ENCODE measurements at regions of chr5 and their contacts with region 1.

Region 1: GRCh38 chr5:118791926-118792734 is 196.2 kb downstream of the DTWD2 start:
- DNase-seq: peak; percentile 44
- ATAC-seq: peak; percentile 81
- H3K4me3 Mint-ChIP-seq: no peak overlapping the region
- H3K27ac Mint-ChIP-seq: no peak overlapping the region
- H3K4me1 Mint-ChIP-seq: no peaks in the 10 kb centered on the region
- H3K27me3 Mint-ChIP-seq: peaks cover 7% of the 10 kb centered on the region

Region 2: GRCh38 chr5:117454716-117455596 is 1337.2 kb before region 1 on chr5:
- CTCF ChIA-PET with region 1: interaction called, 14 read pairs
- DNase-seq: peak; percentile 58
- ATAC-seq: peak; percentile 63
- H3K4me3 Mint-ChIP-seq: peak overlapping the region; percentile 27
- H3K27ac Mint-ChIP-seq: no peak overlapping the region
- H3K4me1 Mint-ChIP-seq: peaks cover 2% of the 10 kb centered on the region
- H3K27me3 Mint-ChIP-seq: no peaks in the 10 kb centered on the region

Measured in activated CD8-positive, alpha-beta memory T cell treated with anti-CD3 and anti-CD28 coated beads, Interleukin-2, amount 10 ng/mL, durations not matched to agents 7 days and 5 days (primary cell).